ENCODE measurements at regions of chr4 and their contacts with region 1.

Region 1: GRCh38 chr4:39638354-39639240 is at the start of gene SMIM14:
- DNase-seq: peak; percentile 99
- ATAC-seq: peak; percentile 98
- total RNA-seq, gene SMIM14: 21.7 to 22.3 TPM

Region 2: GRCh38 chr4:39527273-39528060 is 111.1 kb before region 1 on chr4 and contains the start of gene UGDH:
- intact Hi-C with region 1: loop called in 1 of 2 experiments (anchors 1 kb)
- DNase-seq: peak; percentile 98
- ATAC-seq: peak; percentile 98
- total RNA-seq, gene UGDH: 28.7 to 40.6 TPM

Measured in left cardiac atrium (tissue), 4 donors.